Naive thymus-derived CD4-positive, alpha-beta T cell (primary cell): ENCODE measurements at regions of chr5 and their contacts with region 1.

Region 1: DNA sequence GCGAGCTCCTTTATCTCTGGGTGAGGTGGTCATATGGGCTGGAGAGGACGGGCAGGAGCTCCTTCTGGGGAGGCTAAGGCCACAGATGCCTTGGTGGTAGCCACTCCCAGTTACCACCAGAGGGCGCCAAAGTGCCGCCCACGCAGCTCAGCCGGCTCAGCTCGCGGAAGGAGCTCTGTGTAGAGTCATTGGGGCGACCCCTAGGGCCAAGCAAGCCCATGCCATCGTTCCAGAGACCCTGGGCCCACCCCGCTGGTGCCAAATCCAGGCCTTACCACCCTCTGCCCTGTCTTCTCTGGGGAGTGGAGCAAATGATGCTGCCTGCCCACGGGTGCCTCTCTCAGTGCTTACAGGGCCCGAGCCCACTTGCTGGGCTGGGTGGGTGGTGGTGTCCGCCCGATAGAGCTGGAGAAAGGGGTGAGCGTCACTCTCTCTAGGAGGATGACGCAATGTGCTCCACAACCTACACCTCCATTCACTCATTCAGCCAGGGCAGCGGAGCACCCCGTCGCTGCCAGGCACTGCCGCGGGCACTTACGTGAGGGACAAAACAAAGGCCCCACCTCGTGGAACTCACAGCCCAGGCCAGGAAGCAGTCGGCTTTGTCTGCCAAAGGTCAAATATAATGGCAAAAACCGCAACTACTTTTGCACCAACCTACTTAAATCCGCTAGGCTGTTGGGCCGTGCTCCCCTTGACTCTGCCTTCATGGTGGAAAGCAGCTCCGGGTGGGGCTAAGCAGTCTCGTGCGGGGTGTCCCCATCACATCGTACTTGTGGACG is 13.8 kb downstream of the TSPAN17 start:
- DNase-seq: peak; percentile 62 to 87 (median 75)
- ATAC-seq: peak; percentile 84
- H3K4me3 ChIP-seq: peak overlapping the region; percentile 13
- H3K4me3 Mint-ChIP-seq: peak overlapping the region in 5 of 10 donors; percentile 5 to 70 (median 59)
- H3K27ac ChIP-seq: no peak overlapping the region
- H3K27ac Mint-ChIP-seq: peak overlapping the region in 5 of 9 donors; percentile 49 to 72 (median 67)
- H3K4me1 ChIP-seq: peaks cover 25 to 31% of the 10 kb centered on the region in 2 donors
- H3K4me1 Mint-ChIP-seq: peaks cover 26 to 35% (median 33%) of the 10 kb centered on the region in 7 donors
- H3K27me3 ChIP-seq: no peaks in the 10 kb centered on the region
- H3K27me3 Mint-ChIP-seq: peaks cover 6 to 19% (median 11%) of the 10 kb centered on the region in 5 donors

Region 2: DNA sequence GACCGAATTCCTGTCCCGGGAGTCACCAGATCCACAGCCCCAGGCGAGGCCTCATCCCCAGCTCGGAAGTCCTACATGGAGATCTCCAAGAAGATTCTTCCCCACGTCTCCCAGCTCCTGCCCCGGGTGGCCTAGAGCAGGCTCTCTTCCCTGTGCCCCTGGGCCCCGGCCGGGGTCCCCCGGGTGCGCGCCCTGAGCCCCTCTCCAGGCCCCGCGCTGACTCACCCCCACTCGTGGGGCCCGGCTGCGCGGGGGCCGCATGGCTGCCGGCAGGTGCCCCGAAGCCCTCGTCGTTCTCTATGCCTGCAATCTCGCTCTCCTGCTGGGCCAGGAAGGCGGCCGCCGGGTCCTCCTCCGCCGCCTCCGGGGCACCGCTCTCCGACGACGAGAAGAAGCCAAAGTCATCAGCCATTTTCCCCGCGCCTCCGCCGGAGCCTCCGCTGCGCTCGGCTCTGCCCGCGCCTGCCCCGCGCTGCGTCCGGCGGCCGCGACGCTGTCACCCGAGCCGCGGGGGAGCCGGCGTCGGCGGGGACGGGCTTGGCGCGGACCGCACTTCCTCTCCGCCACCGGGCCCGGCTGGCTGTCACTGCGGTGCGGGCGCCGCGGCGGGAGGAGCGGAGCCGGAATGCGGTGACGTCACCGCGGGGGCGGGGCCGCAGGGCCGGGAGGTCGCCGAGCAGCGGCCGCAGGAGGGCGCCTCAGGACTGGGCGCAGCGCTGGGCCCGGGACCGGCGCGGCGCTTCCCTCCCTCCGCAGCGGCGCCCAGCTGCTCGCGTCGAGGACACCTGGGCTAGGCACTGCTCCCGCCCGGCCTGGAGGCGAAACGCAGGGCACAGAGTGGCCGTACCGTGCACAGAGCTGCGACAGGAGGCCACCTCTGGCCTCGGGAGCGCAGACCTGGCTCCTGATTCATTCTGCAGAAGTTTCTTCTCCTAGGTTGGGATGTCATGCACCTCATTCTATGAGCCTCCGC is 244.8 kb before region 1 on chr5 and contains the start of gene CLTB:
- CTCF ChIA-PET with region 1: interaction called, 3 read pairs
- POLR2A ChIA-PET with region 1: no interaction called
- intact Hi-C with region 1: loop called in 1 of 2 experiments (anchors 1 kb)
- DNase-seq: peak; percentile 73 to 86 (median 84)
- ATAC-seq: peak; percentile 97
- H3K4me3 ChIP-seq: peak within 1 kb of the TSS; percentile 52
- H3K4me3 Mint-ChIP-seq: peak within 1 kb of the TSS; percentile 74 to 89 (median 84)
- H3K27ac ChIP-seq: peak within 1 kb of the TSS; percentile 86
- H3K27ac Mint-ChIP-seq: peak within 1 kb of the TSS; percentile 71 to 91 (median 87)
- H3K4me1 ChIP-seq: peaks cover 21 to 28% of the 10 kb centered on the region in 2 donors
- H3K4me1 Mint-ChIP-seq: peaks cover 17 to 53% (median 47%) of the 10 kb centered on the region in 7 donors
- H3K27me3 ChIP-seq: no peaks in the 10 kb centered on the region
- H3K27me3 Mint-ChIP-seq: peaks cover 0 to 19% (median 0%) of the 10 kb centered on the region in 5 donors
- total RNA-seq, gene CLTB: 30.6 to 67.2 (median 63.8) TPM

Region 3: GRCh38 chr5:176573564-176574296 is 87.3 kb before region 1 on chr5:
- CTCF ChIA-PET with region 1: interaction called, 4 read pairs
- POLR2A ChIA-PET with region 1: no interaction called
- intact Hi-C with region 1: loop called in 1 of 2 experiments (anchors 2 kb)
- DNase-seq: peak; percentile 48 to 80 (median 67)
- ATAC-seq: peak; percentile 88
- H3K4me3 ChIP-seq: no peak overlapping the region
- H3K4me3 Mint-ChIP-seq: no peak overlapping the region
- H3K27ac ChIP-seq: no peak overlapping the region
- H3K27ac Mint-ChIP-seq: peak overlapping the region in 1 of 9 donors; percentile 46
- H3K4me1 ChIP-seq: no peaks in the 10 kb centered on the region
- H3K4me1 Mint-ChIP-seq: peaks cover 0 to 11% (median 6%) of the 10 kb centered on the region in 7 donors
- H3K27me3 ChIP-seq: no peaks in the 10 kb centered on the region
- H3K27me3 Mint-ChIP-seq: peaks cover 0 to 4% (median 0%) of the 10 kb centered on the region in 5 donors

Region 4: DNA sequence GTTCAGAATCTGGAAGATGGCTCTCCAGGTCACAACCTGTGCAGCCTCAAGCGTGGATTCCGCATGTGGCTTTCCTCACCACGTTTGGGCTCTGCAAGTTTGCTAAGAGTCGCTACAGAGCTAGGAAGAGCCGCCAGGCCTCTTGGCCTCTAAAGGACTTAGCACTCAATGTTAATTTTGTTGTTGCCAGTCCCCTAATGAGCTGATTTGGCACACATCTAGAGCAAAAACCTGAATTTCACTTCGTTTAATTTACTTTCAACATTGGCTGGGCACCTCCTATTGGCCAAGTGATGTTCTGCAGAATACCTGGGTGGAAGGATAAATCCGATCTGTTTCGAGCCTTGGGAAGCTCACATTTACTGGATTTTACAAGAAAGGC is 83.5 kb after region 1 on chr5:
- CTCF ChIA-PET with region 1: interaction called, 4 read pairs
- POLR2A ChIA-PET with region 1: no interaction called
- intact Hi-C with region 1: loop called in 1 of 2 experiments (anchors 10 kb)
- DNase-seq: no peak
- ATAC-seq: no peak
- H3K4me3 ChIP-seq: no peak overlapping the region
- H3K4me3 Mint-ChIP-seq: peak overlapping the region in 5 of 10 donors; percentile 36 to 60 (median 40)
- H3K27ac ChIP-seq: no peak overlapping the region
- H3K27ac Mint-ChIP-seq: no peak overlapping the region
- H3K4me1 ChIP-seq: peaks cover 7 to 19% of the 10 kb centered on the region in 2 donors
- H3K4me1 Mint-ChIP-seq: peaks cover 14 to 43% (median 32%) of the 10 kb centered on the region in 7 donors
- H3K27me3 ChIP-seq: peaks cover 2 to 15% of the 10 kb centered on the region in 2 donors
- H3K27me3 Mint-ChIP-seq: peaks cover 48 to 73% (median 63%) of the 10 kb centered on the region in 5 donors

Region 5: GRCh38 chr5:176810084-176810597 is 149.1 kb after region 1 on chr5 and contains the start of gene UNC5A:
- CTCF ChIA-PET with region 1: no interaction called
- POLR2A ChIA-PET with region 1: no interaction called
- intact Hi-C with region 1: loop called (anchors 5 kb)
- DNase-seq: peak; percentile 17 to 79 (median 49)
- ATAC-seq: peak; percentile 69
- H3K4me3 ChIP-seq: peak within 1 kb of the TSS; percentile 9
- H3K4me3 Mint-ChIP-seq: peak within 1 kb of the TSS; percentile 70 to 91 (median 84)
- H3K27ac ChIP-seq: no peak within 1 kb of the TSS
- H3K27ac Mint-ChIP-seq: peak within 1 kb of the TSS in 1 of 9 donors; percentile 65
- H3K4me1 ChIP-seq: peaks cover 0 to 6% of the 10 kb centered on the region in 2 donors
- H3K4me1 Mint-ChIP-seq: peaks cover 7 to 17% (median 14%) of the 10 kb centered on the region in 7 donors
- H3K27me3 ChIP-seq: peaks cover 0 to 4% of the 10 kb centered on the region in 2 donors
- H3K27me3 Mint-ChIP-seq: peaks cover 66 to 75% (median 72%) of the 10 kb centered on the region in 5 donors
- total RNA-seq, gene UNC5A: not detected

Region 6: DNA sequence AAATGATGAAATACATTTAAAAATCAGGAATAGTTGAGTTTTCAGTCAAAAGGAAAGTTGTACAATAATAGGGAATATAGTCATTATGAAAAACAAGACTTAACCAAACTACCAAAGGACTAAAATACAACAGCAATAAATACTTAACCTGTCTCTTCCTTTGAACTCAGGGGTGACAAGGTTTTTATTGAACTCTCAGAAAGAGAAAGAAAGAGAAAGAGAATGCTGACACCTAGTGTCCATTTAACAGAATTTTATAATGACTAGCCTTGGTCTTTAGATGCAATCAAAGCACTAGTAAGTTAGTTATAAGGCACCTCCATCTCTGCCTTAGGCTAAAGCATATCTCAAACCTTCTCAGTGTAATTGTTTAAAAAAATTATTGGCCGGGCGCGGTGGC is 298.0 kb after region 1 on chr5:
- CTCF ChIA-PET with region 1: interaction called, 8 read pairs
- POLR2A ChIA-PET with region 1: no interaction called
- intact Hi-C with region 1: loop called (anchors 2 kb)
- DNase-seq: peak in 6 of 9 donors; percentile 21 to 59 (median 41)
- ATAC-seq: peak; percentile 70
- H3K4me3 ChIP-seq: no peak overlapping the region
- H3K4me3 Mint-ChIP-seq: no peak overlapping the region
- H3K27ac ChIP-seq: no peak overlapping the region
- H3K27ac Mint-ChIP-seq: peak overlapping the region in 1 of 9 donors; percentile 19
- H3K4me1 ChIP-seq: no peaks in the 10 kb centered on the region
- H3K4me1 Mint-ChIP-seq: peaks cover 2 to 19% (median 11%) of the 10 kb centered on the region in 7 donors
- H3K27me3 ChIP-seq: no peaks in the 10 kb centered on the region
- H3K27me3 Mint-ChIP-seq: no peaks in the 10 kb centered on the region

Region 7: DNA sequence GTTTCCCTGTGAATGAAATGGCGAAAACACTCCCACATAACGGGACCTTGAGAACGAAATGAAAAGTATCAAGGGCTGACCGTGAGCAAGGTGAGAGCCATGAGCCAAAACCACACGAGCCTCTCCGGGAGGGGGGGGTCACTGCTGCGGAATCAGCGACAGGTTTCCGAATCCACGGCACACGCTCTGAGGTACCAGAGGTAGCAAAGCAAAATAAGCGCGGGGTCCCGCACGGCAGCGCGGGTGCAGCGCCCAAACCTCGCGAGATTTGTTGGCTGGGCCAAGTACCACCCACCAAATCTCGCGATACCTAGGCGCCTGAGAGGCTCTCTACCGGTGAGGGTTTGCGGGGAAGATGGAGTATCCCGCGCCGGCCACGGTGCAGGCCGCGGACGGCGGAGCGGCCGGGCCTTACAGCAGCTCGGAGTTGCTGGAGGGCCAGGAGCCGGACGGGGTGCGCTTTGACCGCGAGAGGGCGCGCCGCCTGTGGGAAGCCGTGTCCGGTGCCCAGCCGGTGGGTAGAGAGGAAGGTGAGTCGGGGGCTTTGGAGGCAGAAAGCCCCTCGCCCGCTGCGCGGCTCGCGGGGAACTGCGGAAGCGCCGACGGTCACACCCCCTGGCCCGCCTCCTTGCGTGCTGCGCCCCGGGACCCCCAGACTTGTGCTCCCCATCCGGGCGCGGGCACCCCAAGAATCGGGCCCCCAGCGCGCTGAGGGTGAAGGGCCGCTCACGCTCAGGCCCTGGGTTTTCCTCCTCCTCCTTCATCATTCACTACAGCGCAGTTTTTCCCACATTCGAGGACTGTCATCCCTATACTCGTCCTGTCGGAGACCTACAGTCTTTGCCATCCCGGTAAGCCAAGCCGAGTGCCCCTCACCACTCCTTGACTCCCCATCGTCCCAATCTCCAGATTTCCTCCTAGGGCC is 361.6 kb after region 1 on chr5 and contains the start of gene ZNF346:
- CTCF ChIA-PET with region 1: no interaction called
- POLR2A ChIA-PET with region 1: no interaction called
- intact Hi-C with region 1: loop called in 1 of 2 experiments (anchors 5 kb)
- DNase-seq: peak; percentile 80 to 93 (median 91)
- ATAC-seq: peak; percentile 98
- H3K4me3 ChIP-seq: peak within 1 kb of the TSS; percentile 62
- H3K4me3 Mint-ChIP-seq: peak within 1 kb of the TSS; percentile 97 to 100 (median 99)
- H3K27ac ChIP-seq: peak within 1 kb of the TSS; percentile 91
- H3K27ac Mint-ChIP-seq: peak within 1 kb of the TSS; percentile 95 to 99 (median 98)
- H3K4me1 ChIP-seq: peaks cover 15 to 16% of the 10 kb centered on the region in 2 donors
- H3K4me1 Mint-ChIP-seq: peaks cover 28 to 57% (median 45%) of the 10 kb centered on the region in 7 donors
- H3K27me3 ChIP-seq: no peaks in the 10 kb centered on the region
- H3K27me3 Mint-ChIP-seq: no peaks in the 10 kb centered on the region
- total RNA-seq, gene ZNF346: 18.1 to 28.2 (median 24.0) TPM